GM12878 (cell line): ENCODE measurements at regions of chr9 and their contacts with region 1.

Region 1: DNA sequence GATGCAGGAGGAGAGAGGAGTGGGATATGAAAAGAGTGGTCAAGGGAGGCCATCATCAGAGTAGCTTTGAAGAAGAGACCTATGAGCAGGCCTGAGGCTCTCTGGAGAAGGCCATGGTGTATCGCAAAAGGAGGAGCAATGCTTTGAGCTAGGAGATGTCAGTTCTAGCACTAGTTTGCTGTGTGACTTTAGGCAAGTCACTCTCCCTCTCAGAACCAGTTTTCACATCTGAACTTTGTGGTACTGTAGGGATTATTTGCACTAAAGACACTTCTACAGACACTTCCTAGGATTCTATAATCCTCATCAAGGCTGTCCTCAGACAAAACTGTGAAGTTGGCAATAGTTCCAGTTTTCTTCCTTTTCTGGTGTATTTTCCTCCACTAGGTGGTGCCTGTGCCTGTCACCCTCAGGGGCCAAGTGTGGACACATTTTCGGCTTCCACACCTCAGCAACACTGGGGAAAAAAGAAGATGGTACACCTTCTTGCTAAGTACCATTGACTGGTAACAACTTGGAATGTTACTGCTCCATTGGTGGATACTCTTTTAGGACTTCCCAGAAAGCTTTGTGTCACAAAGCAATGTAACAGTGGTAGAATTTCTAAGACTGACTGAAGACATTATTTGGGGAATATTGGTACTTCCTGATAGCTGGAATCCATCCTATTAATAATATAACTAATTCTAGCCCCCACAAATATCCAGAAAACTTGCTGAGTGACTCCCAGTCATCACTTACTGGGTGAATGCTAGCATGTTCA is 9.9 kb downstream of the PAPPA start:
- DNase-seq: no peak
- ATAC-seq: peak; percentile 54
- H3K4me3 ChIP-seq: no peak overlapping the region
- H3K27ac ChIP-seq: no peak overlapping the region
- H3K4me1 ChIP-seq: no peaks in the 10 kb centered on the region
- H3K27me3 ChIP-seq: no peaks in the 10 kb centered on the region
- CTCF ChIP-seq: peak; percentile 36 to 42 (median 41); a peak in 4 of 6 replicates
- EP300 ChIP-seq: no peak
- POLR2A ChIP-seq: no peak
- RAD21 ChIP-seq: peak; percentile 48

Region 2: GRCh38 chr9:116149844-116150243 is 13.6 kb before region 1 on chr9:
- CTCF ChIA-PET with region 1: interaction called, 12 read pairs
- POLR2A ChIA-PET with region 1: interaction called, 4 read pairs
- RAD21 ChIA-PET with region 1: no interaction called
- SMC1A ChIA-PET with region 1: interaction called, 4 read pairs
- in situ Hi-C with region 1: no loop called
- intact Hi-C with region 1: no loop called
- DNase-seq: no peak
- ATAC-seq: peak; percentile 77
- H3K4me3 ChIP-seq: no peak overlapping the region
- H3K27ac ChIP-seq: no peak overlapping the region
- H3K4me1 ChIP-seq: no peaks in the 10 kb centered on the region
- H3K27me3 ChIP-seq: peaks cover under 1 to 8% of the 10 kb centered on the region in 2 experiments; a peak in 3 of 4 replicates
- CTCF ChIP-seq: peak; percentile 50 to 54 (median 54)
- EP300 ChIP-seq: no peak
- POLR2A ChIP-seq: no peak
- RAD21 ChIP-seq: peak; percentile 53

Region 3: DNA sequence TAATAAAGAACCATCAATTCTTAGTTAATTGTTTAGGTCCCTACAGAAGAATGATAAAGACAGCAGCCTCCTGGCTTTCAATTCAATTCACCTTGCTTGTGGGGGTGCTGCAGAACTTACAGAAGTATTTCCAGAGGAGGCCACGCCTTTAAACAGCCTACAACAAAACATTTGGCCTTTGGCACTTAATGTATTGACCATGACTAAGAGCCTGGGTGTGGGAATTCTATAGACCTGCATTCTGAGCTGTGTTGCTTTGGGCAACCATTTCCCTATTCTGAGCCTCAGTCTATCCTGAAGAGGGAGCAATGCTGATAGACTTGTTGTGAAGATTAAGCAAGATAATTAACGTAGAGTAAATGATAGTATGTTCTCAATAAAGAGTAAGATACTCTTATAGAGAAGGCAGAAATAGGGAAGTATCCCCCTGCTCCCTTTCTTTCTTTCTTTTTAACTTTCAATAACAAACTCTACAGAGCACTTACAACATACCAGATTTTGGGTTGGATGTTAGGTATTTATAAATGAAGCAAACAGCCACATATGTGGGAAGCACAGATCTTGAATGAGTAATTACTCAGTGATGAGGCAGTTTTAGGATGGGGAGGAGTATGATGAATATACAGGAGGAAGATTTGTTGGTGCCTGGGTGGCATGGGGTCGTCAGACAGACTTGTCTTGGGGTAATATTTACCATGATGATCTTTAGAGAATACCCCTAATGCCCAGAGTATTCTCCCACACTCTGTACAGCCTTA is 18.6 kb after region 1 on chr9:
- CTCF ChIA-PET with region 1: no interaction called
- POLR2A ChIA-PET with region 1: no interaction called
- RAD21 ChIA-PET with region 1: no interaction called
- SMC1A ChIA-PET with region 1: no interaction called
- in situ Hi-C with region 1: no loop called
- intact Hi-C with region 1: no loop called
- DNase-seq: no peak
- ATAC-seq: no peak
- H3K4me3 ChIP-seq: no peak overlapping the region
- H3K27ac ChIP-seq: no peak overlapping the region
- H3K4me1 ChIP-seq: no peaks in the 10 kb centered on the region
- H3K27me3 ChIP-seq: peaks cover 0 to 2% of the 10 kb centered on the region in 2 experiments; a peak in 1 of 4 replicates
- CTCF ChIP-seq: no peak
- EP300 ChIP-seq: no peak
- POLR2A ChIP-seq: no peak
- RAD21 ChIP-seq: no peak

Region 4: DNA sequence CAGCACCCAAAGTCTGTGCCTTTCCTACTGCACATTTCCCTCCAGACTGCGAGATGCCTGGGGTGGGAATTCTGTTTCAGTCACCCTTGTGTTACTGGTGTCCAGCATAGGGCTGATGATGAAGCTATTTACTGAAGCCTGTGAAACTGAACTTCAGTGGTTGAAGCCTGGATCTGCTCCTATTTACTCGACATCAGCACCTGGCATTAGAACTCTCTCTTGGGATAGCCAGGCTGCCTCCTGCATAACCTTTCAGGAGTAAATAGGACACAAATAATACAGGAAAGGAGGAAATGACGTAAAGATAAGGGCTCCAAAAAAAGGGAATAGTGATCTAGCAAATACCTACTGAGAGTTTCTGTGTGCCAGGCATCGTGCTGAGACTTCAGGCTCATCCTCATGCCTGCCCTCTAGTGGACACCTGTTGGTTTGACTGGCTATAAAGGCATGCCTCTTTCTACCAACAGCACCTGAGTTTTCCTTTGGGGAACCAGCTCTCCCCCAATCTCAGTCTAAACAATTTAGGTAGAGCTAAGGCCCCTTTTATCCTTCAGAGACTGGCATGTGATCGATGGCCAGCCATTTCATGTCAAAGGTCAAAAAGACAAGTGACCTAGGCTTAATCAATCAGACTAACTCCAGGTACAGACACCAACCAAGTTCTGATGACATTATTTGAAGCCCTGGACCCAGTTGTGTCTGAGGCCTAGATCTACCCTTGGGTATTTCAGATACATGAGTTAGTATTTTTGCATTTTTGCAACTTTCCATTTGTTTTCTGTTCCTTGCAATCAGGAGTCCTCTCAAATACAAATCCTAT is 331.6 kb after region 1 on chr9:
- CTCF ChIA-PET with region 1: interaction called, 6 read pairs
- POLR2A ChIA-PET with region 1: no interaction called
- RAD21 ChIA-PET with region 1: no interaction called
- SMC1A ChIA-PET with region 1: interaction called, 4 read pairs
- in situ Hi-C with region 1: no loop called
- intact Hi-C with region 1: loop called (anchors 10 kb)
- DNase-seq: no peak
- ATAC-seq: peak; percentile 82
- H3K4me3 ChIP-seq: no peak overlapping the region
- H3K27ac ChIP-seq: no peak overlapping the region
- H3K4me1 ChIP-seq: no peaks in the 10 kb centered on the region
- H3K27me3 ChIP-seq: no peaks in the 10 kb centered on the region
- CTCF ChIP-seq: peak; percentile 60 to 79 (median 77)
- EP300 ChIP-seq: no peak
- POLR2A ChIP-seq: no peak
- RAD21 ChIP-seq: peak; percentile 55

Region 5: DNA sequence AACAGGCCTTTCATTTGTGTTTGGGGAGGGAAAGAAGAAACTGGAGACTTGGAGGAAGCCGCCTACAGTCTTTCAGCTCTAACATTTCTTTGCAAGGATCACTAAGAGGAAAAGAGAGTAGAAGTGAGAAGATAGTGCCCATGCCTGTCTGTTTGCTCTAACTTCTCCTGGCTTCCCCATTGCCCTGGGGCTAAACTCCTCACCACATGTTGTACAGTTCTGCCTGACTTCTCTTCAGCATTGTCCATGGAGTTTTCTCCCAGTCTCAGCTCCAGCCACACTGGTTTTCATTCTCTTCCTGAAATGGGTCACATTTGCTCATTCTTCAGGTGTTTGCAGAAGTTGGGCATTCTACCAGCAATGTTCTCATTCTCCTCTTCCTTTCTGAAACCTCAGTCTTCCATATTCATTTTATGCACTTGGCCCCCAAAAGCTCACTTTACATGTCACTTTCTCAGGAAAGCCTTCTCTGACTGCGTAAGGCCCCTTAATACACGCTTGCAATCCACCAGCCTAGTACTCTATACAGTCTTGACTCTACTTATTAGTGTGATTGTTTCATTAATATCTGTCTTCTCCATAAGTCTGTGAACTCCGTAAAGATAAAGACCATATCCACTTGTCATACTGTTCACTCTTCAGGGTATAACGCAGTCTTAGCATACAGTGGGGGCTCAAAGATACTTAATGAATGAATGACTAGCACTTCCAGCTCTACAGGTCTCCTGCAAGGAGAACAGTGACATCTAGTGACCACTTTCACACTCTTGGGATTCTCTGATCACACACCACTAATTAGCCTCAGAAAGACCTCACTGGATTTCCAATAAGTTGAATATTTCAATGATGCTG is 483.4 kb after region 1 on chr9:
- CTCF ChIA-PET with region 1: no interaction called
- POLR2A ChIA-PET with region 1: no interaction called
- RAD21 ChIA-PET with region 1: interaction called, 3 read pairs
- SMC1A ChIA-PET with region 1: no interaction called
- in situ Hi-C with region 1: no loop called
- intact Hi-C with region 1: loop called (anchors 1 kb)
- DNase-seq: no peak
- ATAC-seq: peak; percentile 75
- H3K4me3 ChIP-seq: no peak overlapping the region
- H3K27ac ChIP-seq: no peak overlapping the region
- H3K4me1 ChIP-seq: no peaks in the 10 kb centered on the region
- H3K27me3 ChIP-seq: no peaks in the 10 kb centered on the region
- CTCF ChIP-seq: peak; percentile 46 to 57 (median 49); a peak in 5 of 6 replicates
- EP300 ChIP-seq: no peak
- POLR2A ChIP-seq: no peak
- RAD21 ChIP-seq: peak; percentile 68